ENCODE measurements at regions of chr12 and their contacts with region 1.

Region 1: GRCh38 chr12:123232807-123233543 is at the starts of genes MPHOSPH9 and MTRFR:
- DNase-seq: peak; percentile 96
- ATAC-seq: peak; percentile 90
- H3K4me3 Mint-ChIP-seq: peak within 1 kb of the TSS; percentile 98
- H3K27ac Mint-ChIP-seq: peak within 1 kb of the TSS; percentile 98
- H3K4me1 Mint-ChIP-seq: peaks cover 73% of the 10 kb centered on the region
- H3K27me3 Mint-ChIP-seq: peaks cover 3% of the 10 kb centered on the region
- CTCF ChIP-seq: no peak
- total RNA-seq, gene MPHOSPH9: 37.3 and 47.2 TPM in 2 replicates
- total RNA-seq, gene MTRFR: 23.5 and 23.6 TPM in 2 replicates

Region 2: GRCh38 chr12:122752464-122753318 is 480.3 kb before region 1 on chr12 and contains the start of gene DENR:
- CTCF ChIA-PET with region 1: no interaction called
- POLR2A ChIA-PET with region 1: no interaction called
- intact Hi-C with region 1: loop called (anchors 10 kb)
- DNase-seq: peak; percentile 99
- ATAC-seq: peak; percentile 92
- H3K4me3 Mint-ChIP-seq: peak within 1 kb of the TSS; percentile 91
- H3K27ac Mint-ChIP-seq: peak within 1 kb of the TSS; percentile 92
- H3K4me1 Mint-ChIP-seq: peaks cover 46% of the 10 kb centered on the region
- H3K27me3 Mint-ChIP-seq: no peaks in the 10 kb centered on the region
- CTCF ChIP-seq: no peak
- total RNA-seq, gene DENR: 50.5 and 53.3 TPM in 2 replicates

Region 3: GRCh38 chr12:122974274-122974891 is 258.6 kb before region 1 on chr12:
- CTCF ChIA-PET with region 1: interaction called, 8 read pairs
- POLR2A ChIA-PET with region 1: interaction called, 40 read pairs
- intact Hi-C with region 1: loop called (anchors 1 kb)
- DNase-seq: peak; percentile 96
- ATAC-seq: peak; percentile 87
- H3K4me3 Mint-ChIP-seq: peak overlapping the region; percentile 98
- H3K27ac Mint-ChIP-seq: peak overlapping the region; percentile 99
- H3K4me1 Mint-ChIP-seq: peaks cover 28% of the 10 kb centered on the region
- H3K27me3 Mint-ChIP-seq: no peaks in the 10 kb centered on the region
- CTCF ChIP-seq: no peak

Region 4: GRCh38 chr12:123141615-123142517 is 91.1 kb before region 1 on chr12:
- CTCF ChIA-PET with region 1: no interaction called
- POLR2A ChIA-PET with region 1: interaction called, 15 read pairs
- intact Hi-C with region 1: no loop called
- DNase-seq: no peak
- ATAC-seq: no peak
- H3K4me3 Mint-ChIP-seq: no peak overlapping the region
- H3K27ac Mint-ChIP-seq: no peak overlapping the region
- H3K4me1 Mint-ChIP-seq: peaks cover 51% of the 10 kb centered on the region
- H3K27me3 Mint-ChIP-seq: no peaks in the 10 kb centered on the region
- CTCF ChIP-seq: no peak

Region 5: GRCh38 chr12:123365025-123365917 is 132.3 kb after region 1 on chr12:
- CTCF ChIA-PET with region 1: no interaction called
- POLR2A ChIA-PET with region 1: interaction called, 53 read pairs
- intact Hi-C with region 1: loop called (anchors 1 kb)
- DNase-seq: peak; percentile 91
- ATAC-seq: peak; percentile 69
- H3K4me3 Mint-ChIP-seq: peak overlapping the region; percentile 90
- H3K27ac Mint-ChIP-seq: peak overlapping the region; percentile 99
- H3K4me1 Mint-ChIP-seq: peaks cover 21% of the 10 kb centered on the region
- H3K27me3 Mint-ChIP-seq: no peaks in the 10 kb centered on the region
- CTCF ChIP-seq: no peak

Region 6: DNA sequence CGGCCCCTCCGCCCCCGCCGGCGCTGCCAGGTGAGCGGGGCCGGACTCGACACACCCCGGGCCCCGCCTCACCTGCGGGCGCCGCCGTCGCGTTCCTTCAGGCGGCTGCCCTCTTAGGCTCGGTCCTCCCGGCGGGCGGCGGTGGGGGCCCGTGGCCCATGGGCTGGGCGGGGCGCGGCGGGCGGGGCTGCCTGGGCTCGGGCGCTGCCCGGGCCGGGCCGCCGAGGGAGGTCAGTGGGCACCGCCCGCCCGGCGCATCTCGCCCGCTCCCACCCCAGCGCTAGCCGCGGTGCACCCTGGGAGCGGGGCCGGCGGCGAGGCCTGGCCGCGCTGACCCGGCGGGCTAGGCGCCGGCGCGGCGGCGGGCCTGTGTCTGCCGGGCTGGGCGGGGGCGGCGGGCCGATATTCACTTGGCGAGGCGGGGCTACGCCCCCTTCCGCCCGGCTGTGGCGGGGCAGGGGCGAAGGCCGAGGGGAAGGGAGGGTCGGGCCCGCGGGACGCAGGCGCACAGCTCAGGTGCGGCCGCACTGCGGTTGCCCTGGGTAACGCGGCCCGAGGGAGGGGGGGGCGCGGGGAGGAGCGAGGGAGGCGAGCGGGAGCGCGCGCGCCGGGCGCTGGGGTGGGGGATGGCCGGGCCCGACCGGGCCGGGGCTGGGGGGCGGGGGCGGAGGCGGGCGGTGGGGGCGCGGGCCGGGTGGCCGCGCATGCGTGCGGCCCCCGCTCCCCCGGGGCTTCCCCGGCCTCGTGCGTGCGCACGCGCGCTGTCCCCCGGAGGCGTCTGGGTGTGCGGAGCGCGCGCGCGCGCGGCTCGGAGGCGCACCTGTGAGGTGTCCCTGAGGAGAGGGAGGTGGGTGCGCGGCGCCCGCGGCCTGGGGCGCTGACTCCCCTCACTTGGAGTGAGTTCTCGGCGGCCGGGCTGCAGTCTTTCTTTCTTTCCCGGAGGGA is 739.8 kb after region 1 on chr12 and contains the starts of genes CCDC92 and ZNF664:
- CTCF ChIA-PET with region 1: no interaction called
- POLR2A ChIA-PET with region 1: no interaction called
- intact Hi-C with region 1: loop called (anchors 10 kb)
- DNase-seq: peak; percentile 98
- ATAC-seq: peak; percentile 84
- H3K4me3 Mint-ChIP-seq: peak within 1 kb of the TSS; percentile 92
- H3K27ac Mint-ChIP-seq: peak within 1 kb of the TSS; percentile 88
- H3K4me1 Mint-ChIP-seq: peaks cover 15% of the 10 kb centered on the region
- H3K27me3 Mint-ChIP-seq: no peaks in the 10 kb centered on the region
- CTCF ChIP-seq: no peak
- total RNA-seq, gene CCDC92: 21.5 and 23.7 TPM in 2 replicates
- total RNA-seq, gene ZNF664: 35.6 and 40.7 TPM in 2 replicates

Measured in activated B cell treated with CpG ODN at 0.5 μM for 24 hours (primary cell).